ENCODE measurements at regions of chr13 and their contacts with region 1.

Region 1: DNA sequence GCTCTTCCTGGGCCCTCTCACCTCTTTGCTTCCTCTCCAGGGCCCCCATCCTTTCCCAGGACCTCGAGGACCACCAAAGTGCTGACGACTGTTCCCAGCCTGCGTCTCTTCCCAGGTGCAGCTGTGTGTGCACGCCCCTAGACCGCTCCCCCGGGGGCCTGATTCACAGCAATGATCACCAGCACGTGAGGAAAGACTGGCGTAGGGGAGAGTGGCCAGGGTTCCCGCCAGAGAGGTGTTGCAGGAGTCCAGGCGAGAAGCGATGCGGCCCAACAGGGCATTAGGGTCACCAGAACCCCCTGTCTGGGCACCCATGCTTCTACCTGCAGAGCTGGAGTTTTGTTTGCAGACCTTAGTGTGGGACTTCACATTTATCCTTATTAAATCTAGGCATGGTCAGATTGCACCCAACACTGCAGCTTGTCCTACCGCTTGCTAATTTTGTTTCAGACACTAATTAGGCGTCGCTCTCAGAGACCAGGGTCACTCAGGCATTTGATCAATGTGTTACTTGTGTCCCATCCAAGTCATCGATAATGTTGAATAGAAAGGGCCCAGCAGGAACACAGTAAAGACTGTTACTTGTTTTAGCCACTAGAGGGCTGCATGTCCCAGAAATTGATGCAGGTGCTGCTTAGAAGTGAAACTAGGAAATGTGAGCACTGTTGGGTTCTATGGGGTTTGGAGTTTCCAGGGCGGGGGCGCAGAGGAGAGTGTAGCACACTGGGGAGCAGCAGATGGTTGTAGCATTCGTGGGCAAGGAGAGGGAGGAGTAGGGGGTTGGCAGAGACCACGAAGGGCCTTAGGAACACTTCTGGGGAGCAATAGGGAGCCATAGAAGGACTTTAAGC is 53.2 kb downstream of the CDADC1 start:
- DNase-seq: peak; percentile 52 to 68
- H3K4me3 ChIP-seq: peak overlapping the region; percentile 13 to 25
- H3K27ac ChIP-seq: peak overlapping the region; percentile 13 to 57
- H3K4me1 ChIP-seq: no peaks in the 10 kb centered on the region
- H3K27me3 ChIP-seq: no peaks in the 10 kb centered on the region
- CTCF ChIP-seq: peak; percentile 81 to 95 (median 90)
- POLR2A ChIP-seq: no peak

Region 2: DNA sequence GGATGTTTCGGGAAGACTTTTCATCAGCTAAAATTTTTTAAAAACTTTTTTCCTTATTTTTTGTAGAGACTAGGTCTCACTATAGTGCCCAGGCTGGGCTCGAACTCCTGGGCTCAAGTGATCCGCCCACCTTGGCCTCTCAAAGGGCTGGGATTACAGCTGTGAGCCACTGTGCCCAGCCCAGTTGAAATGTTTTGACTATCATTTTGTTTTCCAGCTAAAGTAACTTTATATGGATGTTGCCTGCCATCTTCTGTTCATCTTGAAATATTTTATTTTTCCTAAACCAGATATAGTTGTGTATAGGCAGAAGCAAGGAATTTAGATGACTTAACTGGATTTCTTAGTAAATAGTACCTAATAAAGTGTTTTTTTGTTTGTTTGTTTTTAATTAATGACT is 135.9 kb after region 1 on chr13:
- intact Hi-C with region 1: loop called (anchors 10 kb)
- DNase-seq: peak; percentile 43 to 48
- H3K4me3 ChIP-seq: no peak overlapping the region
- H3K27ac ChIP-seq: peak overlapping the region in 1 of 2 donors; percentile 61
- H3K4me1 ChIP-seq: no peaks in the 10 kb centered on the region
- H3K27me3 ChIP-seq: no peaks in the 10 kb centered on the region
- CTCF ChIP-seq: peak; percentile 32 to 62 (median 56)
- POLR2A ChIP-seq: no peak

Region 3: GRCh38 chr13:49606747-49607648 is 306.0 kb after region 1 on chr13:
- intact Hi-C with region 1: loop called (anchors 5 kb)
- DNase-seq: peak; percentile 85 to 89
- H3K4me3 ChIP-seq: peak overlapping the region; percentile 5 to 14
- H3K27ac ChIP-seq: peak overlapping the region; percentile 34 to 61
- H3K4me1 ChIP-seq: no peaks in the 10 kb centered on the region
- H3K27me3 ChIP-seq: no peaks in the 10 kb centered on the region
- CTCF ChIP-seq: peak; percentile 75 to 90 (median 82)
- POLR2A ChIP-seq: no peak